ENCODE measurements at regions of chr19 and their contacts with region 1.

Region 1: GRCh38 chr19:36772311-36773222 is at the start of gene ZNF850:
- DNase-seq: peak; percentile 98
- ATAC-seq: peak; percentile 92
- H3K4me3 ChIP-seq: peak within 1 kb of the TSS; percentile 66 to 99 (median 96)
- H3K4me3 Mint-ChIP-seq: peak within 1 kb of the TSS; percentile 98
- H3K27ac ChIP-seq: peak within 1 kb of the TSS; percentile 69 to 81
- H3K27ac Mint-ChIP-seq: peak within 1 kb of the TSS; percentile 94
- H3K4me1 ChIP-seq: peaks cover 15 to 21% of the 10 kb centered on the region in 2 donors
- H3K4me1 Mint-ChIP-seq: peaks cover 25% of the 10 kb centered on the region
- H3K27me3 ChIP-seq: no peaks in the 10 kb centered on the region
- H3K27me3 Mint-ChIP-seq: no peaks in the 10 kb centered on the region
- CTCF ChIP-seq: no peak
- total RNA-seq, gene ZNF850: 6.0 and 6.7 TPM in 2 replicates

Region 2: DNA sequence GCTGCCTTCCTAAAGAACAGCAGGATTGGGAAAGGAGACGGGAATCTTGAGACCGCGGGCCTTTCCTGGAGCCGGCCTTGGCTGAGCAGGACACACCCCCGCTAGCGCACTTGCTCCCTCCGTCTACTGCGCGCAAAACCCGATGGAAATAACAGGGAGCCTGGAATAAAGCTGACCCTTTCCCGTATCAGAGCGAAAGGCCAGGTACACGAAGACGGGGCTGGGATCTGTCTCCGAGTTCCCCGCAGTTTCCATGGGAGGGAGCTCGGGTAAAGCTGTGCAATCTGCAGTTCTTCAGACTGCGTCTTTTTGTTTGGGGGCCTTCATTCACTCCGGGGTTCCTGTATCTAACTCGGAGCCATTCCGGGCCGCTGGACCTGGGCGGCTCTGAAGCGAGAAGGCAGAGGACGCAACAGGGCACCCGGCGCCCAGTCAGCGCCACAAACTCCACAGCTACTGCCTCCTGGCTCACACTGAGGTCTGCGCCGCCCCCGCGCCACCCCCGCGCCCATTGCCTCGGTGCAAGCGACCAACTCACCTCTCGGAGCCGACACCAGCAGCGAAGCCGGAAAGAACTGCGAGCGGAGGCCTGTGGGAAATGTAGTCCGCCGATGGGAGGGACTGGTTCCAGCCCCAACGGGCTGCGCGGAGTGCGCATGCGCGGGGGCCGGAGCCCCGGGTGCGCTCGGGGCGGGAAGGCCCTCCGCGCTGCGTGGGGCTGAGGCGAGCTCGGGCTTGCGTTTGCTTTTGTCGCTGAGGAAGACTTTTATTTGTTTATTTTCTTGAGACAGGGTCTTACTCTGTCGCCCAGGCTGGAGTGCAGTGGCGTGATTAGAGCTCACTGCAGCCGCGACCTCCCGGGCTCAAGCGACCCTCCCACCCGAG is 393.7 kb before region 1 on chr19 and contains the start of gene ZFP14:
- CTCF ChIA-PET with region 1: interaction called, 3 read pairs
- POLR2A ChIA-PET with region 1: no interaction called
- intact Hi-C with region 1: loop called (anchors 5 kb)
- DNase-seq: peak; percentile 97
- ATAC-seq: peak; percentile 98
- H3K4me3 ChIP-seq: peak within 1 kb of the TSS; percentile 79 to 95 (median 85)
- H3K4me3 Mint-ChIP-seq: peak within 1 kb of the TSS; percentile 82
- H3K27ac ChIP-seq: peak within 1 kb of the TSS; percentile 83 to 94
- H3K27ac Mint-ChIP-seq: peak within 1 kb of the TSS; percentile 97
- H3K4me1 ChIP-seq: peaks cover 13 to 19% of the 10 kb centered on the region in 2 donors
- H3K4me1 Mint-ChIP-seq: peaks cover 19% of the 10 kb centered on the region
- H3K27me3 ChIP-seq: no peaks in the 10 kb centered on the region
- H3K27me3 Mint-ChIP-seq: no peaks in the 10 kb centered on the region
- CTCF ChIP-seq: peak; percentile 66
- total RNA-seq, gene ZFP14: 22.4 and 22.7 TPM in 2 replicates

Region 3: GRCh38 chr19:36687214-36688056 is 85.1 kb before region 1 on chr19 and contains the start of gene ZNF567:
- CTCF ChIA-PET with region 1: no interaction called
- POLR2A ChIA-PET with region 1: no interaction called
- intact Hi-C with region 1: loop called (anchors 1 kb)
- DNase-seq: peak; percentile 96
- ATAC-seq: peak; percentile 94
- H3K4me3 ChIP-seq: peak within 1 kb of the TSS; percentile 48 to 90 (median 76)
- H3K4me3 Mint-ChIP-seq: peak within 1 kb of the TSS; percentile 100
- H3K27ac ChIP-seq: peak within 1 kb of the TSS; percentile 56 to 72
- H3K27ac Mint-ChIP-seq: peak within 1 kb of the TSS; percentile 96
- H3K4me1 ChIP-seq: peaks cover 14 to 19% of the 10 kb centered on the region in 2 donors
- H3K4me1 Mint-ChIP-seq: peaks cover 28% of the 10 kb centered on the region
- H3K27me3 ChIP-seq: no peaks in the 10 kb centered on the region
- H3K27me3 Mint-ChIP-seq: no peaks in the 10 kb centered on the region
- CTCF ChIP-seq: no peak
- total RNA-seq, gene ZNF567: 19.7 and 22.4 TPM in 2 replicates

Region 4: DNA sequence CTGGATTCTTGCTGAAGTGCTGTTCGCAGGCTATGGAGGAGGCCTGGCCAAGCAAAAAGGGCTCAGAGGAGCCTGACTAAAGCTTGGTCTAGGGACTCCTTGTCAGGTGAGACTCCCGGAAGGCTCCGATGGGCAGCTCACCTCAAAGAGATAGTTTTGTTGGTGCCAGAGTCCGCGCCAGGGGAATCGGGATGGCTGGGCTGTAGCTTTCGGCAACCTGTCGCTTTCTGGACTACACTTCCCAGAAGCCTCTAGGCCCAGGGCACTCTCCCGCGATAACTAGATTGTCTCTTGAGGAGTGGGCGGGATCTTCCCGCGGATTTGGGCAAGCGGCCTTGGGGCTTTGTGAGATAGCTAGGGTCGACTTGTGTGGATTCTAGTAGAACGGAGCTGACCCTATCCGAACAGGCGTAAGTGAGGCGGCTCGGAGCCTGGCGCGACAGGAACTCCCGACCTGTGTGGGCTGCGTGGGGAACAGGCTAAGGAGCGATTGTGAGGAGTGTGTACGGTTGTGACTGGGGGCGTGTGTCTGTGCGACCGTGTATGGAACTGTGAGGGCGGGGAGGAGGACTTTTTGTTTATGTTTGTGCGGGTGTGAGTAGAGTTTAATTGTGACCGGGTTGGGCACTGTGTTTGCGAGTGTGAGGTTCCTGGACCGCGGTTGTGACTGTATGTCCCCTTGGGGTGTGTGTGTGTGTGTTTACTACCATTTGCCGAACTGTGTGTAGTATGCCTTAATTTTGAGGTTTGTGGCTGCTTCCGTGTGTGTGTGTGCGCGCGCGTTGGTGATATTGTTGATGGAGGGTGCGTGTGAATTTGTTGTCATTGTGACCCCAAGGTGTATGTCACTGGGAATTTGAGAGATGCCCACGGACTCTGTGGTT is 78.2 kb after region 1 on chr19 and contains the start of gene ZNF345:
- CTCF ChIA-PET with region 1: no interaction called
- POLR2A ChIA-PET with region 1: interaction called, 4 read pairs
- intact Hi-C with region 1: loop called (anchors 1 kb)
- DNase-seq: peak; percentile 93
- ATAC-seq: peak; percentile 82
- H3K4me3 ChIP-seq: peak within 1 kb of the TSS; percentile 92 to 100 (median 93)
- H3K4me3 Mint-ChIP-seq: no peak within 1 kb of the TSS
- H3K27ac ChIP-seq: peak within 1 kb of the TSS; percentile 74 to 84
- H3K27ac Mint-ChIP-seq: no peak within 1 kb of the TSS
- H3K4me1 ChIP-seq: peaks cover 16 to 20% of the 10 kb centered on the region in 2 donors
- H3K4me1 Mint-ChIP-seq: peaks cover 5% of the 10 kb centered on the region
- H3K27me3 ChIP-seq: no peaks in the 10 kb centered on the region
- H3K27me3 Mint-ChIP-seq: no peaks in the 10 kb centered on the region
- CTCF ChIP-seq: no peak
- total RNA-seq, gene ZNF345: 17.7 and 19.5 TPM in 2 replicates

Region 5: GRCh38 chr19:37077934-37078725 is 305.6 kb after region 1 on chr19 and contains the start of gene ZNF420:
- CTCF ChIA-PET with region 1: no interaction called
- POLR2A ChIA-PET with region 1: no interaction called
- intact Hi-C with region 1: loop called (anchors 2 kb)
- DNase-seq: peak; percentile 96
- ATAC-seq: peak; percentile 95
- H3K4me3 ChIP-seq: peak within 1 kb of the TSS; percentile 76 to 93 (median 85)
- H3K4me3 Mint-ChIP-seq: peak within 1 kb of the TSS; percentile 93
- H3K27ac ChIP-seq: peak within 1 kb of the TSS; percentile 71 to 89
- H3K27ac Mint-ChIP-seq: peak within 1 kb of the TSS; percentile 96
- H3K4me1 ChIP-seq: peaks cover 14 to 20% of the 10 kb centered on the region in 2 donors
- H3K4me1 Mint-ChIP-seq: peaks cover 29% of the 10 kb centered on the region
- H3K27me3 ChIP-seq: no peaks in the 10 kb centered on the region
- H3K27me3 Mint-ChIP-seq: no peaks in the 10 kb centered on the region
- CTCF ChIP-seq: no peak
- total RNA-seq, gene ZNF420: 17.4 and 24.9 TPM in 2 replicates

Region 6: GRCh38 chr19:37370880-37371661 is 598.5 kb after region 1 on chr19 and contains the start of gene ZNF527:
- CTCF ChIA-PET with region 1: no interaction called
- POLR2A ChIA-PET with region 1: no interaction called
- intact Hi-C with region 1: loop called (anchors 2 kb)
- DNase-seq: peak; percentile 98
- ATAC-seq: peak; percentile 96
- H3K4me3 ChIP-seq: peak within 1 kb of the TSS; percentile 59 to 87 (median 79)
- H3K4me3 Mint-ChIP-seq: peak within 1 kb of the TSS; percentile 99
- H3K27ac ChIP-seq: peak within 1 kb of the TSS; percentile 73 to 87
- H3K27ac Mint-ChIP-seq: peak within 1 kb of the TSS; percentile 98
- H3K4me1 ChIP-seq: peaks cover 5 to 14% of the 10 kb centered on the region in 2 donors
- H3K4me1 Mint-ChIP-seq: peaks cover 12% of the 10 kb centered on the region
- H3K27me3 ChIP-seq: no peaks in the 10 kb centered on the region
- H3K27me3 Mint-ChIP-seq: no peaks in the 10 kb centered on the region
- CTCF ChIP-seq: peak; percentile 12
- total RNA-seq, gene ZNF527: 9.0 and 11.4 TPM in 2 replicates